ENCODE measurements at regions of chr3 and their contacts with region 1.

Region 1: GRCh38 chr3:49939858-49940666 is at the start of gene RBM6:
- DNase-seq: peak; percentile 96
- ATAC-seq: peak; percentile 98
- H3K4me3 ChIP-seq: peak within 1 kb of the TSS; percentile 91
- H3K27ac ChIP-seq: peak within 1 kb of the TSS; percentile 82
- H3K4me1 ChIP-seq: peaks cover 4% of the 10 kb centered on the region
- H3K27me3 ChIP-seq: no peaks in the 10 kb centered on the region
- CTCF ChIP-seq: no peak
- total RNA-seq, gene RBM6: 64.6 and 73.5 TPM in 2 replicates

Region 2: DNA sequence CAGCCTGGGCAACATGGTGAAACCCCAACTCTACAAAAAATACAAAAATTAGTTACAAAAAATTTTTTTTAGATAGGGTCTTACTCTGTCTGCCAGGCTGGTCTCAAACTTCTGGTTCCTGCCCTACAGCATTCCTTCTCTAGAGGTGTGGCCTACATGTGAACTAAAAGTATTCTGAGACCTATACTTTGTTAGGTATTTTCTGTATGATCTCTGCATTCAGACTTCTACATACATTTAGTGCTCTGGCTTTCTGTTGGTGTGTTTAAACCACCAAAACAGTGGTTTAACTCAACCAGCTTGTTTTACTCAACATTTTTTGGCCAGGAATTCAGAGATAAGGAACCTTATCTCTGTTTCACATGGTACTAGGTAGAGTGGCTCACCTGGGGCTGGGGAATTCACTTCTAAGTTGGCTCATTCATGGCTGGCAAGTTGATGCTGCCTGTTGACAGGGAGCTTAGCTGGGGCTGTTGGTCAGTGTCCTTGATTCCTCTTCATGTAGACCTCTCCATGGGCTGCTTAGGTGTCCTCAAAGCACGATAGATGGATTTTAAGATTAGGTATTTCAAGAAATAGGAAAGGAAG is 427.2 kb before region 1 on chr3:
- CTCF ChIA-PET with region 1: no interaction called
- POLR2A ChIA-PET with region 1: no interaction called
- intact Hi-C with region 1: no loop called
- DNase-seq: peak; percentile 10
- ATAC-seq: no peak
- H3K4me3 ChIP-seq: no peak overlapping the region
- H3K27ac ChIP-seq: no peak overlapping the region
- H3K4me1 ChIP-seq: no peaks in the 10 kb centered on the region
- H3K27me3 ChIP-seq: no peaks in the 10 kb centered on the region
- CTCF ChIP-seq: no peak

Region 3: DNA sequence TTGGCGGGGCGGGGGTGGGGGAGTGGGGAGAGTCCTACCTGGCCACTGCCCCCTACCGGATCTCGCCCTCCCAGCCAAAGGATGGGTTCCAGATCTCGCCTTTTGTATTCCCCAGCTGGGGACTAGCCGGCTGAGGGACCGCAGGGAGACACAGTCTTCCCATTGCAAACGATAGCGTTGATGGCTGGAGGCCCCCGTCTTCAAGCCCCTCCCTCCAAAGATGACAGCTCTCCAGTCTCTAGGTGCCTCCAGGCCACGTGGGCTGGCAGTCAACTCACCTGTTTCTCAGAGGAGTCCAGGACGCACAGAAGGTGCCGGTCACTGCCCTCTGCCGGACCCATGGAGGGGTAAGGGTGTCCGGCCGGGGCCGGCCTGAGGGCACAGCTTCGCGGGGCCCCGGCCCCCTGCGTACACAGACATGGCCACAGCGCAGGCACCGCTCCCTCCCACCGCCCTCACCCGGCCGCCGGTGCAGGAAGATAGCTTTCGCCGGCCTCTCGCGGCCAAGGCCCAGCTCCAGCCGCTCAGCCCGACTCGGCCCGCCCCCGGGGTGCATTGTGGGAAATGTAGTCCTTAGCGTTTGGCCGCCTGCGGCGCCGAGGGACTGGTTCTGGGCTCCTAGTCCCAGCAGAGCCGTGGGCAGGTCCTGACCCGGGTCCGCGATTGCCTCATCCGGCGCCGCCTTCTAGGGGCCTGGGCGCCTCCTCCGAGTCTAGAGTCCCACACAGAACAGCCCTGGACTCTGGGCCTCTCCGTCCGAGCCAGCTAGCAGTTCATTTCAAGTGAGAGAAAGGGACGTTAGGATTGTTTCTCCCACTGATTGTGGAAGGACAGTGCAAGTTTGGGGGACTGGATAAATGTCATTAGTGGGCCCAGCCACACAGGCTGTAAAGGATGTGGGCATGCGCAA is 10.5 kb before region 1 on chr3 and contains the start of gene MON1A:
- CTCF ChIA-PET with region 1: interaction called, 6 read pairs
- POLR2A ChIA-PET with region 1: interaction called, 9 read pairs
- intact Hi-C with region 1: loop called (anchors 1 kb)
- DNase-seq: peak; percentile 94
- ATAC-seq: peak; percentile 94
- H3K4me3 ChIP-seq: peak within 1 kb of the TSS; percentile 94
- H3K27ac ChIP-seq: peak within 1 kb of the TSS; percentile 53
- H3K4me1 ChIP-seq: peaks cover 34% of the 10 kb centered on the region
- H3K27me3 ChIP-seq: no peaks in the 10 kb centered on the region
- CTCF ChIP-seq: peak; percentile 46; the same call in 1 of the 2 replicates
- total RNA-seq, gene MON1A: 20.8 and 24.9 TPM in 2 replicates

Measured in PC-3 (cell line).